Right ventricle myocardium superior (tissue), 1 donor: ENCODE measurements at regions of chr10 and their contacts with region 1.

Region 1: DNA sequence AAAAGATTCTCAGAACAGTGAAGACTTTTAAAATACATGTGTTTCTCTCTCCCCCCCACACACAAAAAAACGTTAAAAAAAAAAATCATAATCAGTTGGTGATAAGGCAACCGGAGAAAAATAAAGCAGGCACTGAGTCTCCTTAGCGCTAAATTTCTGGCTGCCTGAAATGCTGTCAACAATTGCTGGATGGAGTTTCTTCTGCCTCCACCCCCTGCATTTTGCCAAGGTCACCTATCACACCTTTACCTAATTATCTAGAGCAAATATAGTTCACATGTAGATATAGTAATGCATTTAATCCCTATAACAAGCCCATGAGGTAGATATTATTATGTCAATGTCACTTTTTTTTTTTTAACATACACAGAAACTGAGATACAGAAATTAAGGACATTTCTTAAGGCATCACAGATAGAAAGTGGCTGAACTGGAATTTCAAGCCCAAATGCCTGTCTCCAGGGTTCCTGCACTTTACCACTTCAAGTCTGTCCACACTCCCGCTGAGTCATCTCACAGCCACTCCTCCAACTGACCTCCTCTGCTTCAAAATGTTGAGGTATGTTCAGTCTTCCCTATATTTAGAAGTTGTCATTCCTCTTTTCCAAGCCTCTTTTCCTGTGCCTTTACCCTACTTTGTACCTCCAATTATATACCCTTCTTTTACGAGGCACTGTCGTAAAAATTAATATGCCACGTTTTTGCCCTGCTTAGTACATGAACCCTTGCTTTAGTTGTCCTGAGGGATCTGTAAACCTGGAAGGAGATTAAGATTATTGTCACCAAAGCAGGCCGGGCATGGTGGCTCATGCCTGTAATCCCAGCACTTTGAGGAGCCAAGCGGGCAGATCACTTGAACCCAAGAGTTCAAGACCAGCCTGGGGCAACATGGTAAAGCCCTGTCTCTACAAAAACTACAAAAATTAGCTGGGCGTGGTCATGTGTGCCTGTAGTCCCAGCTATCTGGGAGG is 72.8 kb upstream of the MPP7 start:
- DNase-seq: no peak
- ATAC-seq: peak; percentile 82

Region 2: GRCh38 chr10:28302638-28303488 is 72.8 kb before region 1 on chr10 and contains the start of gene MPP7:
- intact Hi-C with region 1: loop called (anchors 10 kb)
- DNase-seq: peak; percentile 97
- ATAC-seq: peak; percentile 98
- total RNA-seq, gene MPP7: 14.0 TPM

Region 3: GRCh38 chr10:28796606-28797512 is 421.2 kb after region 1 on chr10:
- intact Hi-C with region 1: no loop called
- DNase-seq: peak; percentile 83
- ATAC-seq: peak; percentile 95